CD4-positive, alpha-beta T cell (primary cell): ENCODE measurements at regions of chr6 and their contacts with region 1.

Region 1: GRCh38 chr6:158660333-158660754 is 10.5 kb downstream of the SYTL3 start:
- DNase-seq: peak in 13 of 14 experiments; percentile 25 to 83 (median 53)
- ATAC-seq: peak; percentile 81
- H3K4me3 ChIP-seq: no peak overlapping the region
- H3K4me3 Mint-ChIP-seq: peak overlapping the region; percentile 38
- H3K27ac ChIP-seq: no peak overlapping the region
- H3K27ac Mint-ChIP-seq: peak overlapping the region; percentile 84
- H3K4me1 ChIP-seq: peaks cover 32% of the 10 kb centered on the region
- H3K4me1 Mint-ChIP-seq: peaks cover 52% of the 10 kb centered on the region
- H3K27me3 ChIP-seq: no peaks in the 10 kb centered on the region
- H3K27me3 Mint-ChIP-seq: no peaks in the 10 kb centered on the region
- CTCF ChIP-seq: peak; percentile 83

Region 2: DNA sequence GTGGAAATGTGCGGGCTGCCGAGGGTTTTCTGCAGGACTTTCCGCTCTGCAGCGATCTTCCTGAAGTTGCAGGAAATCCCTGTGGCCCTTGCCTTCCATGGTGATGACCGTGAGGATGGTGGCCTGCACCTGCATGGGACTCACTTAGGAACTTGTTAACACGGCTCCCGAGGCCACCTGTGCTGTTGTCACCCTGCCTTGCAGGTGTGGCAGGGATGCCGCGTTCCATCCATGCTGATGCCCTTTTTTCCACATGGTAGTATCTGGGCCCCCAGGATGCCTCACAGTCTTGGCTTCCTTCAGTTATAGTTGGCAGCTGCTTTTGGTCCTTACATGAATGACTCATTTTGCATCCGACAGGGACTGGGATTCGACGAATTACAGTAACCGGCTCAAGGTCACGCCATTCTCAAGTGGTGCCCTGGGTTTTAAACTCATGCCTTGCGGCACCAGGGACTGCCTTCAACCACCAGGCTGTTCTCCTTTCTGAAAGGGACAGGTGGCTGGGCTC is 641.4 kb before region 1 on chr6:
- CTCF ChIA-PET with region 1: no interaction called
- POLR2A ChIA-PET with region 1: no interaction called
- intact Hi-C with region 1: no loop called
- DNase-seq: no peak
- ATAC-seq: no peak
- H3K4me3 ChIP-seq: no peak overlapping the region
- H3K4me3 Mint-ChIP-seq: no peak overlapping the region
- H3K27ac ChIP-seq: no peak overlapping the region
- H3K27ac Mint-ChIP-seq: no peak overlapping the region
- H3K4me1 ChIP-seq: peaks cover 10% of the 10 kb centered on the region
- H3K4me1 Mint-ChIP-seq: peaks cover 28% of the 10 kb centered on the region
- H3K27me3 ChIP-seq: no peaks in the 10 kb centered on the region
- H3K27me3 Mint-ChIP-seq: no peaks in the 10 kb centered on the region
- CTCF ChIP-seq: no peak

Region 3: GRCh38 chr6:158680481-158680880 is 20.1 kb after region 1 on chr6:
- CTCF ChIA-PET with region 1: interaction called, 3 read pairs
- POLR2A ChIA-PET with region 1: interaction called, 9 read pairs
- intact Hi-C with region 1: loop called in 1 of 2 experiments (anchors 2 kb)
- DNase-seq: no peak
- ATAC-seq: no peak
- H3K4me3 ChIP-seq: no peak overlapping the region
- H3K4me3 Mint-ChIP-seq: no peak overlapping the region
- H3K27ac ChIP-seq: no peak overlapping the region
- H3K27ac Mint-ChIP-seq: no peak overlapping the region
- H3K4me1 ChIP-seq: peaks cover 12% of the 10 kb centered on the region
- H3K4me1 Mint-ChIP-seq: peaks cover 18% of the 10 kb centered on the region
- H3K27me3 ChIP-seq: no peaks in the 10 kb centered on the region
- H3K27me3 Mint-ChIP-seq: no peaks in the 10 kb centered on the region
- CTCF ChIP-seq: no peak

Region 4: DNA sequence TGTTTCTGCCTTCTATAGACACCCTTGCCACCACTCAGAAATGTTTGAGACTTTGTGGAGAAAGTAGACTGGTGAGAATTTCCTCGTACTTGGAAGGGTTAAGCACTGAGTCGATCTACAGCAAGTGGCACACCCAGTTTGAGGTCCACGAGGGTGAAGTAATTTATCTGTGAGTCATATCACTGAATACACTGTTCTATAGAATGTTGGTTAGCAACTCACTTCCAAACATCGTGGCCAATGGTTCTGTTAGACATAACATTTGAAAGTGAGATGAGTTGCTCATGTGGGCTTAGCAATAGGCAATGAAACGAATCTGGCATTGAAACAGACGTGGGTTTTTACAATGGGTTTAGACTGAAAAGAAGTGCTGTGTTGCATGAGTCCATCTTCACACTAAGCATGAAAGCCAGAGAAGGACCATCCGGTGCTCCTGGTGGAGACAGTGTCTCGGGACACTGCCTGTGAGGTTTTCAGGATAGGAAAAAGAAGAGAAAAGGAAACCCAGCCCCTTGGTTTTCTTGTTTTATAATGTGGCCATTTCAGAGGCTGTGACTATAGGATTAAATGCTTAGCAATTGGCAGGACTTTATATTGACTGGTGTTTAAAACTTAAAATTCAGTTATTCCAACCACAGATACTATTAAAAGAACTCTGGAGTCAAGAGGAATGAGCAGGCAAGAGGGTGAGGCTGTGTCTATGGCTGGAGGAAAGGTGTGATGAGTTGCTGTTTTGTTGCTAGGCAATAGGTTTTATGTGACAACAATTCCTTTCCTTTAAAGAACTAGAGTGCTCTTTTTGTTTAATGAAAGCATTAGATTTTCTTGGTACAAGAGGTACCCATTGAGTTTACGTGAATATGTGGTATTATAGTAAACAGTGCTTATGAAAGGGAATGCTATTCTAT is 189.8 kb after region 1 on chr6:
- CTCF ChIA-PET with region 1: no interaction called
- POLR2A ChIA-PET with region 1: no interaction called
- intact Hi-C with region 1: no loop called
- DNase-seq: peak in 13 of 14 experiments; percentile 33 to 91 (median 54)
- ATAC-seq: peak; percentile 51
- H3K4me3 ChIP-seq: no peak overlapping the region
- H3K4me3 Mint-ChIP-seq: peak overlapping the region; percentile 26
- H3K27ac ChIP-seq: peak overlapping the region; percentile 59 to 96
- H3K27ac Mint-ChIP-seq: no peak overlapping the region
- H3K4me1 ChIP-seq: peaks cover 49% of the 10 kb centered on the region
- H3K4me1 Mint-ChIP-seq: peaks cover 23% of the 10 kb centered on the region
- H3K27me3 ChIP-seq: no peaks in the 10 kb centered on the region
- H3K27me3 Mint-ChIP-seq: no peaks in the 10 kb centered on the region
- CTCF ChIP-seq: no peak